RWPE1 (cell line): ENCODE measurements at regions of chr2 and their contacts with region 1.

Region 1: DNA sequence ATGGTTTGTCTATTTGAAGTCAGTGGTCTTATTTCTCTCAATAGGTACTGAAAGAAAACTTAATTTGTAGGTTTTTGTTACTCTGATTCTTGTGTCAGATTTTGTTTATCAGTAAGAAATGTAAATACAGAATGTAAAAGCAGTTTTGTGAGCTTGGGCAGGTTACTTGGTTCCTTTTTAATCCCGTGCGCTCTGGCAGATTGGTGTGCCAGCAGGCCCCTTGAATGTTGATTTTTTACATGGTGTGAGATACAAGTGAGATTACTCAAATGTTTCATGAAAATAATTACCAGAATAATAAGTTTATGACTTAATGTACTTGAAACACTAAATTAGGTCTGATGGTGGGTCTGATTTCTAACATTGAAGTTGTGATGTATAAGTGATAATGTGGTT is 13.4 kb downstream of the HNRNPA3 start:
- DNase-seq: no peak
- H3K27ac ChIP-seq: peak overlapping the region; percentile 60
- CTCF ChIP-seq: no peak

Region 2: GRCh38 chr2:176104325-176105077 is 1121.5 kb before region 1 on chr2:
- CTCF ChIA-PET with region 1: no interaction called
- POLR2A ChIA-PET with region 1: interaction called, 12 read pairs
- DNase-seq: no peak
- H3K27ac ChIP-seq: peak overlapping the region; percentile 98
- CTCF ChIP-seq: no peak